ENCODE measurements at regions of chr2 and their contacts with region 1.

Region 1: DNA sequence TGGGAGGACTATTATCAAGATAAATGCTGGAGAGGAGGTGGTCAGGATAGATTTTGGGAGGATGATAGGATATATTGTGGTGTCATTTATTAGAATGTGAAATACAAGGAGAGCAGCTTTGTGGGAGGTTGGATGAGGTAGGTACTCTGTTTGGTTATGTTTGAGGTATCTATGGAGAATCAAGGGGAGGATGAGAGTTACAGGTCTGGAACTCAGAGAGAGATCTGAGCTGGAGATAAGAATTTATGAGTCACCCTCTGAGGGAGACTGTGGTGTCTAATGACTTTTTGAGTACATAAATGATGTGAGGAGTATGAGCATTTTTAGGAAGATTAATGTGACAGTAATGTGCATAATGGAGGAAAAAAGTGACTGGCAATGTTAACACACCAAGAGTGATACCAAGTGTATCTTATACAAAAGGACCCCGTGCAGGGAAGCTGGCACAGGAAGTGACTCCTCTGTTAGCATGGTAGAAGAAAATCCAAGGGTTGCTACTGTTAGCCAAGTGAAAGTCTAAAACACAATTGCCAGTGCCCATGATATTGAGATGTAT is 48.2 kb downstream of the CRIM1 start:
- DNase-seq: no peak
- ATAC-seq: peak in 1 of 4 donors; percentile 45
- H3K4me3 ChIP-seq: no peak overlapping the region
- H3K27ac ChIP-seq: peak overlapping the region in 2 of 12 donors; percentile 0 to 1
- H3K4me1 ChIP-seq: peaks cover 9 to 57% (median 31%) of the 10 kb centered on the region in 12 donors
- H3K27me3 ChIP-seq: no peaks in the 10 kb centered on the region
- CTCF ChIP-seq: no peak
- POLR2A ChIP-seq: no peak

Region 2: DNA sequence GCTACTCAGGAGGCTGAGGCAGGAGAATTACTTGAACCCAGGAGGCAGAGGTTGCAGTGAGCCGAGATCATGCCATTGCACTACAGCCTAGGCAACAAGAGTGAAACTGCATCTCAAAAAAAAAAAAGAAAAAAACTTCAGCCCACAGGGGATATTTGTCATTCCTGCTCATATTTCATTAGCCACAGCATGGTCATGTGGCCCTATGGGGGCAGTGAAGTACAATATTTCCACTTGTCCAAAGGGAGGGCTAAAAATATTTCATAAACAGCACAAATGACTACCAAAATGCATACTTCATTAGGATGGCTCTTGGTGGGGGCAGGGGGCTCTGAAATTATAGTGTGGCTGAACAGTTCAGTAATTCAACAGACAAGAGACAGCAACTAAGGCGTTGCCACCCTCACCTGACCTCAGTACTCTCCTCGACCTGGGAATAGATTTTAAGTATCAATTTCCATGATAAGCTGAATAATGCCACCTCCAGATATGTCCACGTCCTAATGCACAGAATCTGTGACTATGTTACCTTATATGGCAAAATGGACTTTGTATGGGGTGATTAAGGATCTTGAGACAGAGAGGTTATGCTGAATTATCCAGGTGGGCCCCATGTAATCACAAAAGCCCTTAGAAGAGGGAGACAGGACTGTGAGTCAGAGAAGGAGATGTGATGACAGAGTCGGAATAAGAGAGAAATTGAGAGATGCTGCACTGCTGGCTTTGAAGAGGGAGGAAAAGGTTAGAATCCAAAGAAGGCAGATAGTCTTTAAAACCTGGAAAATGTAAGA is 206.4 kb before region 1 on chr2:
- intact Hi-C with region 1: no loop called
- DNase-seq: no peak
- ATAC-seq: no peak
- H3K4me3 ChIP-seq: no peak overlapping the region
- H3K27ac ChIP-seq: no peak overlapping the region
- H3K4me1 ChIP-seq: no peaks in the 10 kb centered on the region
- H3K27me3 ChIP-seq: no peaks in the 10 kb centered on the region
- CTCF ChIP-seq: no peak
- POLR2A ChIP-seq: no peak

Region 3: GRCh38 chr2:36300697-36301096 is 103.1 kb before region 1 on chr2:
- intact Hi-C with region 1: no loop called
- DNase-seq: no peak
- ATAC-seq: no peak
- H3K4me3 ChIP-seq: no peak overlapping the region
- H3K27ac ChIP-seq: no peak overlapping the region
- H3K4me1 ChIP-seq: no peaks in the 10 kb centered on the region
- H3K27me3 ChIP-seq: no peaks in the 10 kb centered on the region
- CTCF ChIP-seq: no peak
- POLR2A ChIP-seq: no peak

Region 4: DNA sequence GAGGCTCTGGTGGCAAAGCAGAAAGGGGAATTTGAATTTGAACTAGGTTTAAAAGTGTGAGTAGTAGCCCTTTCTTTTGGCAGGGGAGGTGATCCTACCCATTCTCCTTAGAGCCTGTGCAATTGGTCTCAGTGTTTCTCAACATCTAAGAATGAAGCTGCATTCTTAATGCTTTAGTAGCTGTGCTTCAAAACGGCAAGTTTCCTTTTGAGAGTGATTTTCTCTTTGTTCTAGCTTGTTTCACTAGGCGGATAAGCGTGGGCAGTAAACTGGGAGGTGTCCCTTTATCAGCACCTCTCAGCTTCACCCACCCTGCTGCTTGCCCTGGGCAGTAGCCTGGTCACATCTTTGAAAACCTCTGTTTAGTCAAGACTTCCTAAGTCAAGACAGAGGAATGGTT is 41.5 kb before region 1 on chr2:
- intact Hi-C with region 1: loop called in 5 of 10 experiments (anchors 5 kb)
- DNase-seq: no peak
- ATAC-seq: no peak
- H3K4me3 ChIP-seq: no peak overlapping the region
- H3K27ac ChIP-seq: no peak overlapping the region
- H3K4me1 ChIP-seq: peaks cover 0 to 84% (median 63%) of the 10 kb centered on the region in 12 donors
- H3K27me3 ChIP-seq: peaks cover 0 to 5% (median 0%) of the 10 kb centered on the region in 9 donors
- CTCF ChIP-seq: no peak
- POLR2A ChIP-seq: no peak

Region 5: GRCh38 chr2:36371928-36372391 is 31.8 kb before region 1 on chr2:
- intact Hi-C with region 1: loop called in 3 of 10 experiments (anchors 5 kb)
- DNase-seq: no peak
- ATAC-seq: no peak
- H3K4me3 ChIP-seq: no peak overlapping the region
- H3K27ac ChIP-seq: peak overlapping the region in 8 of 12 donors; percentile 17 to 59 (median 56)
- H3K4me1 ChIP-seq: peaks cover 14 to 99% (median 84%) of the 10 kb centered on the region in 12 donors
- H3K27me3 ChIP-seq: no peaks in the 10 kb centered on the region
- CTCF ChIP-seq: no peak
- POLR2A ChIP-seq: no peak

Region 6: DNA sequence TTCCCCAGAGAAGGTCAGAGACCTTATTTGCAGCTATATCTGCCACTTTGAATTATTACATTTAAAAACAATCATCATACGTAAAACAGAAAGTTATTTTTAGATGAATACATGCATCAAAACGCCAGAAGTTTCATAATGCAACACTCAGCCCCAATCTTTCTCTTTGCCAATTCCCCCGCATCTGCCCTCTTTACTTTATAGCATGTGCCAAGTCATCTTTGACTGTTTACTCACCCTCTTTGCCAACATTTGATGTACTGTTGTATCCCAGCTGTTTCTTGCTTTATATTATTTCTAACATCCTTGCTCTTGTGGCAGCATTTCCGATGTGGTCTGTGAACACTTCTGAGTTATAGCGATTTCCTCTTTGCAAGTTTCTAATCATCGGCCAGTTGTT is 38.1 kb after region 1 on chr2:
- intact Hi-C with region 1: no loop called
- DNase-seq: no peak
- ATAC-seq: no peak
- H3K4me3 ChIP-seq: peak overlapping the region in 1 of 12 donors; percentile 4
- H3K27ac ChIP-seq: peak overlapping the region in 2 of 12 donors; percentile 22 to 65
- H3K4me1 ChIP-seq: peaks cover 0 to 47% (median 24%) of the 10 kb centered on the region in 12 donors
- H3K27me3 ChIP-seq: no peaks in the 10 kb centered on the region
- CTCF ChIP-seq: no peak
- POLR2A ChIP-seq: no peak

Region 7: GRCh38 chr2:36530178-36530982 is 126.6 kb after region 1 on chr2:
- intact Hi-C with region 1: no loop called
- DNase-seq: no peak
- ATAC-seq: peak in 3 of 4 donors; percentile 4 to 28 (median 11)
- H3K4me3 ChIP-seq: peak overlapping the region in 1 of 12 donors; percentile 4
- H3K27ac ChIP-seq: peak overlapping the region in 9 of 12 donors; percentile 0 to 64 (median 41)
- H3K4me1 ChIP-seq: peaks cover 0 to 47% (median 17%) of the 10 kb centered on the region in 12 donors
- H3K27me3 ChIP-seq: no peaks in the 10 kb centered on the region
- CTCF ChIP-seq: no peak
- POLR2A ChIP-seq: no peak